Activated CD8-positive, alpha-beta T cell treated with anti-CD3 and anti-CD28 coated beads for 36 hours (primary cell): ENCODE measurements at regions of chr19 and their contacts with region 1.

Region 1: DNA sequence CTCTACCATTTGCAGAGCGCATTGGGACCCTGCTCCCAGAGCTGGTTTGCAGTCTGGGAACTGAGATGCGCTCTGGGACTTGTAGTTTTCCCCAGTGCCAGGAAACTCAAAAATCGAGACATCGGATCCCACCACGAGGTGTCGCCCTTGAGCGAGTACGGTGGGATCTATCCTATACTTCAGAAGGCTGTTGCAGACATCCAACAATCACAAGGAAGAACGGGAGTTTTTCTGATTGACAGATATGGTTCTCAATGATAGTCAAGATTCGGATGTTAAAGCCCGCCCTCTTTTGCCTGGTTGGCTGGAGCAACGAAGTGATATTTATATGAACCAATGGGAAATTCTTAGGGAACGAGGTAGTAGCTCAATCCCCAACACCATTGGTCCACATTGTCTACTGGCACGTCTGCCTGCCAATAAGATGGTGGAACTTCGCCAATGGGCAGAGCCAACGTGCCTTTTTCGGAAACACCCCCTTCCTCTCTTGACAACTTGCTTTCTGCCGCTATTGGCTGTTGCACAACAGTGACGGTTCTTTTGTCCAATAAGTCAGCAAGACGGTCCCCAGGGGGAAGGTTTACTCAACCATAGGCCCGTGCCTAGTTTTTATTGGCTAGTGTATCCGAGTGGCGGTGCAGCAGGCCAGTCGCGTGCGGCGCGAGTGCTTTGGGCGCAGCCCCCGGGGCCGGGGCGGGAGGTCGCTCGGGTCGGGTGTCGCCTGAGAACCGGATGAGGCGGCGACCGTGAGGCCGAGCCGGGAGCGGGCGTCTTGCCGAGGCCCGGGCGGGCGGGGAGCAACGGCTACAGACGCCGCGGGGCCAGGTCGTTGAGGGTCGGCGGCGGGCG is at the start of gene DNM2:
- DNase-seq: peak; percentile 98
- ATAC-seq: peak; percentile 91
- H3K4me3 Mint-ChIP-seq: peak within 1 kb of the TSS; percentile 96
- H3K27ac Mint-ChIP-seq: peak within 1 kb of the TSS; percentile 87
- H3K4me1 Mint-ChIP-seq: peaks cover 30% of the 10 kb centered on the region
- H3K27me3 Mint-ChIP-seq: no peaks in the 10 kb centered on the region
- CTCF ChIP-seq: peak; percentile 62
- total RNA-seq, gene DNM2: 151 to 153 TPM

Region 2: DNA sequence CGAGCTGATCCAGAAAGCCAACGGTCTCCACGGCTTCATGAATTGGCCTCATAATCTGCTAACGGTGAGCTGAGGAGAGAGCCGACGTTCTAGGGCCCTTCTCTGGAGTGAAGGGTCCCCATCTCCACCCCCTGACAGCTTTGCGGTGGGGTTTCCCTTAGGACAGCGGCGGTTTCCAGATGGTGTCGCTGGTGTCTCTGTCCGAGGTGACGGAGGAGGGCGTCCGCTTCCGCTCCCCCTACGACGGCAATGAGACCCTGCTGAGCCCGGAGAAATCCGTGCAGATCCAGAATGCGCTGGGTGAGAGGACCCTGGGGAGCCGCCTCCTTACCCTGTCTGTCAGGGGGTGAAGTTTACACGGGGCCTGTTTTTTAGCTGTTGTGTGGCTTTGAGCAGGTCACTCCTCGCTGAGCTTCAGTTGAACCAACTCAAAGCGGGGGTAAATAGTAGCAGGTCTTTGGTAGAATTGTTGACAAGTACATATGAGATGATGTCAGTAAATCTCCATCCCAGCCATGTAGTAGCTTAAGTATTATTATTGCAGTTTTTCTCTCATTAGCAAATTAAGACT is 15.5 kb before region 1 on chr19:
- CTCF ChIA-PET with region 1: interaction called, 54 read pairs
- POLR2A ChIA-PET with region 1: interaction called, 10 read pairs
- intact Hi-C with region 1: no loop called
- DNase-seq: peak; percentile 57
- ATAC-seq: peak; percentile 56
- H3K4me3 Mint-ChIP-seq: peak overlapping the region; percentile 93
- H3K27ac Mint-ChIP-seq: peak overlapping the region; percentile 88
- H3K4me1 Mint-ChIP-seq: peaks cover 8% of the 10 kb centered on the region
- H3K27me3 Mint-ChIP-seq: peaks cover 2% of the 10 kb centered on the region
- CTCF ChIP-seq: no peak

Region 3: DNA sequence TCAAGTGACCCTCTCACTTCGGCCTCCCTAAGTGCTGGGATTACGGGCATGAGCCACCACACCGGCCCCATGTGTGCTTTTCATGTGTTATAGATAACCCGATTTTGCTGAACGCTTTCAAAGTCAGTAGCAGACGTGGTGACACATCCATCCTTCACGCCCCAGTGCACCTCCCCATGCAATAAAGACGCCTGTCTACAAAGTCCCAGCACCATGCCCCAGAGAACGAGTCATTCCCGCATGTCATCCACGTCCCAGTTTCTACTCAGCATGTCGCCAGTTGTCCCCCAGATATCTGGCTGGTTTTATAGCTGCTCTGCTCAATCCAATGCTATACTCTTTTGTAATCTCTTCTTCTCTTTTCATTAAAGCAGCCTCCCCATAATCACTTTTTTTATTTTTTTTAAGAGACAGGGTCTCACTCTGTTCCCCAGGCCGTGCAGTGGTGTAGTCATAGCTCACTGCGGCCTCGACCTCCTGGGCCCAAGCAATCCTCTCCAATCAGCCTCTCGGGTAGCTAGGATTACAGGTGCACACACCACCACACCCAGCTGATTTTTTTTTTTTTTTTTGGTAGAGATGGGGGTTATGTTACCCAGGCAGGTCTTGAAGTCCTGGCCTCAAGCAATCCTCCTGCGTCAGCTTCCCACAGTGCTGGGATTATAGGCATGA is 42.8 kb after region 1 on chr19:
- CTCF ChIA-PET with region 1: interaction called, 10 read pairs
- POLR2A ChIA-PET with region 1: interaction called, 8 read pairs
- intact Hi-C with region 1: loop called (anchors 5 kb)
- DNase-seq: peak; percentile 61
- ATAC-seq: peak; percentile 32
- H3K4me3 Mint-ChIP-seq: peak overlapping the region; percentile 64
- H3K27ac Mint-ChIP-seq: peak overlapping the region; percentile 91
- H3K4me1 Mint-ChIP-seq: peaks cover 81% of the 10 kb centered on the region
- H3K27me3 Mint-ChIP-seq: no peaks in the 10 kb centered on the region
- CTCF ChIP-seq: no peak

Region 4: GRCh38 chr19:10769533-10770491 is 52.2 kb after region 1 on chr19:
- CTCF ChIA-PET with region 1: interaction called, 16 read pairs
- POLR2A ChIA-PET with region 1: interaction called, 8 read pairs
- intact Hi-C with region 1: no loop called
- DNase-seq: peak; percentile 35
- ATAC-seq: peak; percentile 42
- H3K4me3 Mint-ChIP-seq: no peak overlapping the region
- H3K27ac Mint-ChIP-seq: peak overlapping the region; percentile 57
- H3K4me1 Mint-ChIP-seq: peaks cover 15% of the 10 kb centered on the region
- H3K27me3 Mint-ChIP-seq: no peaks in the 10 kb centered on the region
- CTCF ChIP-seq: no peak

Region 5: GRCh38 chr19:10835754-10836477 is 118.3 kb after region 1 on chr19 and contains the start of gene TMED1:
- CTCF ChIA-PET with region 1: interaction called, 24 read pairs
- POLR2A ChIA-PET with region 1: interaction called, 9 read pairs
- intact Hi-C with region 1: no loop called
- DNase-seq: peak; percentile 100
- ATAC-seq: peak; percentile 92
- H3K4me3 Mint-ChIP-seq: peak within 1 kb of the TSS; percentile 98
- H3K27ac Mint-ChIP-seq: peak within 1 kb of the TSS; percentile 99
- H3K4me1 Mint-ChIP-seq: peaks cover 16% of the 10 kb centered on the region
- H3K27me3 Mint-ChIP-seq: no peaks in the 10 kb centered on the region
- CTCF ChIP-seq: no peak
- total RNA-seq, gene TMED1: 12.9 to 15.0 TPM

Region 6: DNA sequence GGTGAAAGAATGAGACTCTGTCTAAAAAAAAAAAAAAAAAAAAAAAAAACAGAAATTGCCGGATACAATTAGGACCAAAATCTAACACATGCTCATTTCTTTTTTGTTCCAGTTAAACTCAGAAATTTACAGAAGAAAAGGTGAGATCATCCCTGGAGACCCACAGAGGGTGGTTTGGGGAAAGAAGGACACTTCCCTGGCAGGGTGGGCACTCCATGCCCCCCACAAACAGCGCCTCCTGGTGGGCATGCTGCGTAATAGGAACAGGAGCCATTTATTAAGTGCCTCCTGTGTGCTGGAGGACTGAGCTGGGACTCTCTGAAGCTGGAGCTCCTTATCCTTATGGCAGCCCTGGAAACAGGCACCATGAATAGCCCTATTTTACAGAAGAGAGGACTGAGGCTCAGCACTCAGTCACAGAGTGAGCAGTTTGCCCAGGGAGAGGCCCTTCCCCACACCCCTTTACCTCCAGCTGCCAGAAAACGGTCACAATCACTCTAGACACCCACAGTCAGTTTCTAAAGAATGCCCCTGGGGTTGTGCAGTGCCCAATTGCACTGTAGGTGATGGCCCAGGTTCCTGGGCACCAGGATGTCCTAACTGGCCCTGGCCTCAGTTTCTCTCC is 140.7 kb after region 1 on chr19:
- CTCF ChIA-PET with region 1: interaction called, 87 read pairs
- POLR2A ChIA-PET with region 1: interaction called, 13 read pairs
- intact Hi-C with region 1: loop called (anchors 5 kb)
- DNase-seq: peak; percentile 58
- ATAC-seq: peak; percentile 68
- H3K4me3 Mint-ChIP-seq: no peak overlapping the region
- H3K27ac Mint-ChIP-seq: no peak overlapping the region
- H3K4me1 Mint-ChIP-seq: no peaks in the 10 kb centered on the region
- H3K27me3 Mint-ChIP-seq: no peaks in the 10 kb centered on the region
- CTCF ChIP-seq: peak; percentile 98

Region 7: DNA sequence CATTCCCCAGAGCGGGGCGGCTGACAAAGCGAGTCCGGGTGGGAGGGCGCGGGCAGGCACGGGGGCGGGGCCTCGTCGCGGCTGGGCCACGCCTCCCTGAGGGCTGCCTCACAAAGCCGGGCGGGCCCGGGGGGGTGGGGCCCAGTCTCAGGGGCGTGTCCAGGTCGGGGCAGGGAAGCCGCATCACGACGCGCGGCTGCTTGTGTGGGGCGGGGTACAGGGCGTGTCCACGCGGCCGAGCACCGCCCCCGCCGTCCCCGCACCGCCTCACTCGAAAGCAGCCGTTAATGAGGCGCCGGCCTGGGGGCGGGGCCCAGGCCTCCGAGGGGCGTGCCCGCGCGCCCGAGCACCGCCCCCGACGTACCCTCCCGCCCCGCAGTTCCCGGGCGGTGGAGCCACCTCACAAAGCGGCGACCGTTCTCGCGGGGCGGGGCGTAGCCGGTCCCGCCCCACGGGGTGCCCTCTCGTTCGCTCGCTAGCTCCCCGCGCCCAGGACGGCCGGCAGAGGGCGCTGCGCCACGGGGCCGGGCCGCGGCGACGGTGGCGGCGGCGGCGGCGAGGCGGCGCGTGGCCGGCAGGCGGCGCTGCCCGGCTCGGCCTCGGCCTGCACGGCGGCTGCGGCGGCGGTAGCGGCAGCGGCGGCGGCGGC is 153.5 kb after region 1 on chr19 and contains the start of gene CARM1:
- CTCF ChIA-PET with region 1: interaction called, 87 read pairs
- POLR2A ChIA-PET with region 1: no interaction called
- intact Hi-C with region 1: no loop called
- DNase-seq: peak; percentile 100
- ATAC-seq: peak; percentile 93
- H3K4me3 Mint-ChIP-seq: peak within 1 kb of the TSS; percentile 76
- H3K27ac Mint-ChIP-seq: peak within 1 kb of the TSS; percentile 87
- H3K4me1 Mint-ChIP-seq: peaks cover 28% of the 10 kb centered on the region
- H3K27me3 Mint-ChIP-seq: no peaks in the 10 kb centered on the region
- CTCF ChIP-seq: no peak
- total RNA-seq, gene CARM1: 95.1 to 95.4 TPM